BJ (cell line): ENCODE measurements at regions of chr17 and their contacts with region 1.

Region 1: DNA sequence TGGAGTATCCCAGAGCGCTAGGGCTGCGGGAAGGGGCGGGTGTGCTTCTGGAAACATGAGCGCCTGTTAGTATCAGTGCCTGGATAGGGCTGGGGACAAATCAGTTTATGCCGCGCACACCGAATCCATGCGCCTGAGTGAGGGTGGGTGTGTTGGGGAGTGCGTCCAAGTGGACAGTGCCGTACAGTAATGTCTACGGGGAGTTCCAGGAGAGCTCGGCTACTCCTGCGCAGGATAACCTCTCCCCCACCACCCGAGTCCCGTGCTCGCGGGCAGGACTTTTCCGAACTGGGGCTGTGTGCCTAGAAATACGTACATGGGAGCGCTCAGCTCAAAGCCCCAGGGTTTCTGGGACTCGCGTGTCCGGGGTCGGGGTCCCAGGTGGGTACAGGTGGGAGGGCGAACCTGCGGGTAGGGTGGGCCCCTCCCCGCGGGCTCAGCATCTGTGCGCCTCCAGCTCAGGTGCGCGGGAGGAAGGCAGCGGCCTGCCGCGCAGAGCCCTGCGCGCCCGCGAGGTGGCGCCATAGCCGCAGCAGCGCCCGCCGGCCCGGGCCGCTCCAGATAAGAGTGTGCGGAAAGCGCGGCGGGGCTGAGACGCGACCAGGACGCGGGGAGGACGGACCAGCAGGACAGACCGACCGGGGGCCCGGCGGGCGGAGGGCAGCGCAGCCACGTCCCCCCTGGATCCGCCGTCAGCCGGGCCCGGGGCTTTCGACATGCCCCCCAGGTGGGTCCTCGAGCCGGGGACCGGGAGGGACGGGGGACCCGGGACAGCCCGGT is at the start of gene HIC1:
- DNase-seq: no peak
- H3K4me3 ChIP-seq: peak within 1 kb of the TSS; percentile 79
- H3K27me3 ChIP-seq: no peaks in the 10 kb centered on the region
- CTCF ChIP-seq: peak; percentile 50
- polyA plus RNA-seq, gene HIC1: 14.8 and 15.1 TPM in 2 replicates

Region 2: GRCh38 chr17:1908699-1909309 is 145.9 kb before region 1 on chr17:
- CTCF ChIA-PET with region 1: interaction called, 12 read pairs
- POLR2A ChIA-PET with region 1: no interaction called
- DNase-seq: peak; percentile 14
- H3K4me3 ChIP-seq: no peak overlapping the region; the same call in 1 of the 2 replicates
- H3K27me3 ChIP-seq: peaks cover 26% of the 10 kb centered on the region
- CTCF ChIP-seq: peak; percentile 79

Region 3: DNA sequence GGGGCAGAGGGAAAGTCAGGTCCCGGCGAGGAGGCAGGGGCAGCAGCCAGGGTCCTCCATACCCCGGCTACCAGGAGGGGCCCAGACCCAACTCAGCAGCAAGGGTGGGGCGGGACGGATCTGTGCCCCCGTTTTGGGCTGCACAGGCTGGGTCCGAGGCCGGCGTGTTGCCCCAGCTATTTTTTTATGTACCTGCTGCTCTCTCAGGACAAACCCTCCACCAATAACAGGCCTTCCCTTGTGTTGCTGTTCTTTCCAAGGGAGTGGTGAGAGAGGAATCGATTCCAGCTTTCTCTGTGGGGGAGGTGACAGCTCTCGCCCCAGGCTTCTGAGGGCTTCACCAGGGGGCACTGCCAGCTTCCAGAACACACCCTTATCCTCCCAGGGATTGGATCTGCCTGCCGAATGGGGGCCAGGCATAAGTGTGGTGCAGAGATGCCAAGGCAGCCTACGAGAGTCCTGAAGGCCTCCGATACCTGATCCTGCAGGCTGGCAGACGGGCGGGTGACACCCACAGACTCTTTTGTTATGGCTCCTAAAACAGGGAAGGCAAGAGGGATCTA is 51.9 kb before region 1 on chr17:
- CTCF ChIA-PET with region 1: no interaction called
- POLR2A ChIA-PET with region 1: no interaction called
- DNase-seq: no peak
- H3K4me3 ChIP-seq: no peak overlapping the region
- H3K27me3 ChIP-seq: no peaks in the 10 kb centered on the region
- CTCF ChIP-seq: no peak

Region 4: GRCh38 chr17:2013994-2014317 is 40.7 kb before region 1 on chr17:
- CTCF ChIA-PET with region 1: no interaction called
- POLR2A ChIA-PET with region 1: no interaction called
- DNase-seq: no peak
- H3K4me3 ChIP-seq: no peak overlapping the region
- H3K27me3 ChIP-seq: peaks cover 10% of the 10 kb centered on the region
- CTCF ChIP-seq: no peak

Region 5: GRCh38 chr17:2070241-2071023 is 15.7 kb after region 1 on chr17:
- CTCF ChIA-PET with region 1: interaction called, 33 read pairs
- POLR2A ChIA-PET with region 1: no interaction called
- DNase-seq: no peak
- H3K4me3 ChIP-seq: no peak overlapping the region
- H3K27me3 ChIP-seq: no peaks in the 10 kb centered on the region
- CTCF ChIP-seq: no peak

Region 6: GRCh38 chr17:2094891-2095535 is 40.3 kb after region 1 on chr17:
- CTCF ChIA-PET with region 1: interaction called, 40 read pairs
- POLR2A ChIA-PET with region 1: no interaction called
- DNase-seq: no peak
- H3K4me3 ChIP-seq: no peak overlapping the region
- H3K27me3 ChIP-seq: no peaks in the 10 kb centered on the region
- CTCF ChIP-seq: peak; percentile 59

Region 7: GRCh38 chr17:2233441-2233947 is 178.8 kb after region 1 on chr17:
- CTCF ChIA-PET with region 1: interaction called, 14 read pairs
- POLR2A ChIA-PET with region 1: interaction called, 3 read pairs
- DNase-seq: peak; percentile 66
- H3K4me3 ChIP-seq: no peak overlapping the region
- H3K27me3 ChIP-seq: no peaks in the 10 kb centered on the region
- CTCF ChIP-seq: no peak

Region 8: GRCh38 chr17:2282297-2282873 is 227.7 kb after region 1 on chr17:
- CTCF ChIA-PET with region 1: interaction called, 24 read pairs
- POLR2A ChIA-PET with region 1: no interaction called
- DNase-seq: no peak
- H3K4me3 ChIP-seq: no peak overlapping the region
- H3K27me3 ChIP-seq: no peaks in the 10 kb centered on the region
- CTCF ChIP-seq: peak; percentile 49